ENCODE measurements at regions of chr15 and their contacts with region 1.

Region 1: DNA sequence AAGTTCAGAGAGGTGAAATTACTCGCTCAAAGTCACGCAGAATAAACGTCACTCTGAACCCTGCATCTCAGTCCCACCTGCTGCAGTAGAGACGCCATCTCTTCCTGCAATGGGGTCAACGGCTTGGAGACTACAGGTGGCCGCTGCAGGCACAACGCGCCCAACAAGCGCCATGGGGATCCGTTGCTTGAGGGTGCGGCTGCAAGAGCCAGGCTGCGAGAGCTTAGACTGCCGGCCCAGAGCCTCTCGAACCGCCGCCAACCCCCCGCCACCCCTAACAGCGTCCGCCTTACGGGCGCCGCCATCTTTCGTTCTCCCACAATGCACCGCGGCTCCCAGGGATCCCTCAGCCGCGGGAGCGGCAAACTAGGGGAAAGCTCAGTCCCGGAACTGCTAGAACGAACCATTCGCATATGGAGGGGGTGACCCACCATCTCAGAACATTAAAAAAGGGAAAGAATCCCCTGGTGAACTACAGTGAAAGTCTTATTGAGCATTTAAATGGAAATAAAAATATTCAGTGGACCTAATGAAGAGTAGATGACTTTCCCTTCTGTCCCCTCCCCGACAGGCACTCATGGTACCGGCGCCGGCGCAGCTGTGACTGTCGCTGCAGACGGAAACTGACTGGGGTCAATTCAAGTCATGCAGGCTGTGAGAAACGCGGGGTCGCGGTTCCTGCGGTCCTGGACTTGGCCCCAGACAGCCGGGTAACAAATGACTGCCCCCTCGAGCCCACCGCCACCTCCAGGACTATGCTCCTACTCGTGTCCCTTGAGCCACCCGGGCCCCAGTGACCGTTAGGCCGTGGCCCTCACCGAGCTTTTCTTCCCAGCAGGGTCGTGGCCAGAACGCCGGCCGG is at the starts of genes MRPL46 and MRPS11:
- DNase-seq: peak; percentile 84 to 94 (median 91)
- H3K4me3 ChIP-seq: peak within 1 kb of the TSS; percentile 73 to 100 (median 94)
- H3K27ac ChIP-seq: peak within 1 kb of the TSS; percentile 78 to 100 (median 99)
- H3K27me3 ChIP-seq: no peaks in the 10 kb centered on the region
- CTCF ChIP-seq: peak in 33 of 56 donors; percentile 6 to 61 (median 30)
- total RNA-seq, gene MRPL46: 23.1 to 42.3 (median 30.9) TPM
- total RNA-seq, gene MRPS11: 34.8 to 66.4 (median 50.4) TPM

Region 2: DNA sequence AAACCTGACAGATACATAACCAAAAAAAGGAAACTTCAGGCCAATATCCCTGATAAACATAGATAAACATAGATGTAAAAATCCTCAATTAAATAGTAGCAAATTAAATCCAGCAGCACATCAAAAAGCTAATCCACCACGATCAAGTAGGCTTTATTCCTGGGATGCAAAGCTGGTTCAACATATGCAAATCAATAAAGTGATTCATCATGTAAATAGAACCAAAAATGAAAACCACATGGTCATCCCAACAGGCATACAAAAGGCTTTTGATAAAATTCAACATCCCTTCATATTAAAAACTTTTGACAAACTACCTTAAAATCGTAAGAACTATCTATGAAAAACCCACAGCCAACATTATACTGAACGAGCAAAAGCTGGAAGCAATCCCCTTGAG is 1093.0 kb before region 1 on chr15:
- intact Hi-C with region 1: no loop called
- DNase-seq: no peak
- H3K4me3 ChIP-seq: no peak overlapping the region
- H3K27ac ChIP-seq: no peak overlapping the region
- H3K27me3 ChIP-seq: no peaks in the 10 kb centered on the region
- CTCF ChIP-seq: no peak

Region 3: DNA sequence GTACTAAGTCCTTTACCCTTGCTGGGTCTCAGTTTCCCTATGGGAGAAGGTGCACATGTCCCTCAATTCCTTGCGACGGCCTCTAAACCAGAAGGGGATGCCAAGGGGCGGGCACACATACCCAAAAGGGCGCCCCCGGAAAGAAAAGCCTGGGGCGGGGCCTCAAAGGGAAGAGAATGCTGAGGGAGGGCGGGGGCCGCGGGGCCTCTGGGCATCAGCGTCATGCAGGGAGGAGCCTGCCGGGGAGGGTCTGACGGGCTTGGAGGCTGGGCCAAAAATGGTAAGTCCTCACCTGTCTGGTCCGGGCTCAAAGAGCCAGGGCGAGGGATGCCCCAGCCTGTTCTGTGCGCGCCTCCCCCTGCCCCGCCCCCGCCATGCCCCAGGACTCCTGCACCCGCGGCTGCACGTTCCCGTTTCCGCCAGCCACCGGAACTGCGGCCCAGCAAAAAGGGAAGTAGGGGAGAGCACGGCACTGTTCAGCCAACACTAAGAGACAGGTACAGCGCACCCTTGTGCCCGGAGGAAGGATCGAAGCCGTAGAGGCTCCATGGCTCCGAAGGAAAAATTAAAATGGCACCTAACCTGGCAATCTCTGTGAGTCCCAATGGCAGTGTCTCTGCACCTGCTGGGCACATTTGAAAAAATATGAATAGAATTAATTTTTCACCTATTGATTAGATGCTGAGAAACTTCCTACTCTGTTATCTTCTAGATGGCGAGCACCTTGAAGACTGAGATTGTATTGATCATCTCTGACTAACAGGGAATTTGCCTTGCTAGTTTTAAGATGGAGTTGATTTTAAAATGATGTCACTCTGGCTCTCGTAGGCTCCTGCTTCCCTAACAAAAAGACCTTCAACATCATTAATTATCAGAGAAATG is 79.2 kb after region 1 on chr15 and contains the start of gene DET1:
- intact Hi-C with region 1: loop called (anchors 5 kb)
- DNase-seq: peak; percentile 93 to 97 (median 96)
- H3K4me3 ChIP-seq: peak within 1 kb of the TSS; percentile 43 to 97 (median 82)
- H3K27ac ChIP-seq: peak within 1 kb of the TSS; percentile 63 to 98 (median 91)
- H3K27me3 ChIP-seq: no peaks in the 10 kb centered on the region
- CTCF ChIP-seq: peak; percentile 74 to 95 (median 89)
- total RNA-seq, gene DET1: 1.8 to 11.2 (median 7.1) TPM

Measured in dorsolateral prefrontal cortex (tissue), 120 donors.